MCF 10A (cell line): ENCODE measurements at regions of chr3 and their contacts with region 1.

Region 1: GRCh38 chr3:40719660-40720287 is 195.0 kb downstream of the ZNF621 start:
- DNase-seq: peak; percentile 83
- H3K4me3 Mint-ChIP-seq: no peak overlapping the region
- H3K27ac Mint-ChIP-seq: no peak overlapping the region
- H3K4me1 Mint-ChIP-seq: peaks cover 17% of the 10 kb centered on the region
- H3K27me3 Mint-ChIP-seq: no peaks in the 10 kb centered on the region
- CTCF ChIP-seq: peak; percentile 51

Region 2: GRCh38 chr3:40329071-40329470 is 390.7 kb before region 1 on chr3:
- CTCF ChIA-PET with region 1: interaction called, 3 read pairs
- POLR2A ChIA-PET with region 1: no interaction called
- intact Hi-C with region 1: loop called (anchors 5 kb)
- DNase-seq: no peak
- H3K4me3 Mint-ChIP-seq: no peak overlapping the region
- H3K27ac Mint-ChIP-seq: no peak overlapping the region
- H3K4me1 Mint-ChIP-seq: no peaks in the 10 kb centered on the region
- H3K27me3 Mint-ChIP-seq: no peaks in the 10 kb centered on the region
- CTCF ChIP-seq: no peak

Region 3: DNA sequence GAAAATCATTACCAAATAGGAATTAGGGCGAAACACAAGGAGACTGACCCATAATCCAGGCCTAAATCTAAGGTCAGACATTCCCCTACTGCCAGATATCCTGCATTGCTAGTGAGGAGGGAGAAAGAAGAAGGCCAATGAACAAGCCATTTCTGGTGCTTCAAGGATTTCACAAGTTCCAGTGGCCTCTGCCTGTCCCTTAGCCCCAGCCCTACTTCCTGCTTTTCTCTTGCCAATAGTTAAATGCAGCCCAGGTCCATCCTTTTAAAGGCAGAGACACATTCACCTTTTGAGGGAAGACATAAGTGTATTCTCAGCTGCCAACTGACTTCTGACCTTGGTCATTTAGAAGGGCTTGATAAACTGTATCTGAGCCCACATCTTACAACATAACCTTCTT is 59.2 kb before region 1 on chr3:
- CTCF ChIA-PET with region 1: no interaction called
- POLR2A ChIA-PET with region 1: no interaction called
- intact Hi-C with region 1: no loop called
- DNase-seq: no peak
- H3K4me3 Mint-ChIP-seq: no peak overlapping the region
- H3K27ac Mint-ChIP-seq: no peak overlapping the region
- H3K4me1 Mint-ChIP-seq: no peaks in the 10 kb centered on the region
- H3K27me3 Mint-ChIP-seq: no peaks in the 10 kb centered on the region
- CTCF ChIP-seq: no peak

Region 4: DNA sequence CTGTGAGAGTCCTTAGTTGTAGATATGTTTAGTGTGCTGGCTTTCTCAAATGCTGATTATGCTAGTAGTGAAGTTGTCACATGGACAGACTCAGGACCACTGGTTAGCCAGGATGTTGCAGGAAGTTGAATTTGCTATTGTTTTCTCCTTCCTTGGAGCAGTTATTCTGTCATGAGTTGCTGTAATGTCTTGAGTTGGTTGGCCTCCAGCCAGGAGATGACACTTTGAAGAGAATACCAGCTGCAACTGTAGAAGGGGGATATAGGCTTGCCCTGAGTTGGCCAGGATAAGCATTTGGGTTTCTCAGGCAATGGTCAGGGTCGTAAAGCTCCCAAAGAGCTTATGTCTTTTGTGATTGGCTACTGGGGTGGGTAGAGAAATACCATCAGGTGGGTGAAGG is 11.7 kb after region 1 on chr3:
- CTCF ChIA-PET with region 1: no interaction called
- POLR2A ChIA-PET with region 1: no interaction called
- intact Hi-C with region 1: no loop called
- DNase-seq: no peak
- H3K4me3 Mint-ChIP-seq: no peak overlapping the region
- H3K27ac Mint-ChIP-seq: no peak overlapping the region
- H3K4me1 Mint-ChIP-seq: no peaks in the 10 kb centered on the region
- H3K27me3 Mint-ChIP-seq: no peaks in the 10 kb centered on the region
- CTCF ChIP-seq: no peak

Region 5: DNA sequence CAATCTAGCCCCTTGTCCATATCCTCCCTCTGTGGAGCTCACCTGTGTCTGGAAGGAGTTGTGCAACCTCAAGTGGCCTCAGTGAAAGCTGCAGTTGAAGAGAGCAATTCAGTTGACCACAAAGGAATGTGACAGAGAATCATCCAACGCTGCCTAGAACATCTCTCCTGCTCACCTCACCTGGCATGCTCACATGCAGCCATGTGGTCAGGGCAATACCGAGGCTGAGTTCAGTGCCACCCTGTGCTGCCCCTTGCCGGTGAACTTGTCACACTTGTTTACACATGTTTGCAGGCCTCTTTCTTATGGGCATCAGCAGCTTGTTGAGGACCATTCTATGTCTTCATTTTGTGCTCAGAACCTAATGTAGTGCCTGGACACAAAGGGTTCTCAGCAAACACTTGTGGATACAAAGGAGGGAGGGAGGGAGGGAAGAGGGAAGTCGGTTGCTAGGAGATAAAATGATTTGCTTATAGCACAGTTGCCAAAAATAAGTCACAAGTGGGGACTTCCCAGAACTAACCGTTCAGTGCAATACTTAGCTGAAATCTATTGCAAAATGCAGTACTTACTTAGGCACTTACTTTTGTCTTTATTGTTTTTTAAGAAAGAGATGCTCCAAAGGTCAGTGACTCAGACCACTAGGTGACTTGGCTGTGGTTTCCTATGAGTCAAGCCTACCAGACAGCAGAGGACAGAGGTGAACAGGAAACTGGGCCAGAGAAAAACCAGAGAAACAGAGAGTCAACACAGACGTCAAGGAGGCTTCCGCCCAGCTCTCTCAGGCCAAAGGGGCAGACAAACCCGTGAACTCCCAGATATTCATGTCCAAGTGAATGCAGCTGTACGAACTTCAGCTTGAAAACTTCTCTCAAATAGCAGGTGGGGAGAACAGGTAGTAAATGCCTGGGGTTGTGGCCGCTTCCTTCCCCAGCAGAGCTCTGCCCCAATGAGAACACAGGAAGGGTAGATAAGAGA is 251.7 kb after region 1 on chr3:
- CTCF ChIA-PET with region 1: interaction called, 5 read pairs
- POLR2A ChIA-PET with region 1: no interaction called
- intact Hi-C with region 1: loop called (anchors 1 kb)
- DNase-seq: peak; percentile 98
- H3K4me3 Mint-ChIP-seq: peak overlapping the region; percentile 5
- H3K27ac Mint-ChIP-seq: peak overlapping the region; percentile 98
- H3K4me1 Mint-ChIP-seq: peaks cover 20% of the 10 kb centered on the region
- H3K27me3 Mint-ChIP-seq: no peaks in the 10 kb centered on the region
- CTCF ChIP-seq: peak; percentile 11

Region 6: DNA sequence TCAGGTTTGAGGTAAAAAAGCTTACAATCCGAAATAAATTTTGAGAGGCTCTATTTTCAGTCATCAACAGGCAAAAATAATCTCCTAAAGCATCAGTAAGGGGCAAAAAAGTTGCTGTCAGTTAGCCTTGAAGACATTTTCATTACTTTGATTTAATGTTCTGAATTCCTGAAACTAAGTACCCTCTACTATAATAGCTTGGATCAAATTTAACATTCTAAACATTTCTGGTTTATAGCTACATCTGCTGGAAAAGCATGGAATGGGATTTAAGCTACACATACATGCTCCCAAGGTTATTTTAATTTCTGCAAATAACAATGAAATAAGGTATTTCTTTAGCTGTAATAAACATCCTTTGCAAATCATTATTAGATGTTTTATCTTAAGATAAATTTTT is 996.7 kb after region 1 on chr3:
- CTCF ChIA-PET with region 1: interaction called, 4 read pairs
- POLR2A ChIA-PET with region 1: no interaction called
- intact Hi-C with region 1: loop called (anchors 2 kb)
- DNase-seq: peak; percentile 9
- H3K4me3 Mint-ChIP-seq: no peak overlapping the region
- H3K27ac Mint-ChIP-seq: no peak overlapping the region
- H3K4me1 Mint-ChIP-seq: no peaks in the 10 kb centered on the region
- H3K27me3 Mint-ChIP-seq: no peaks in the 10 kb centered on the region
- CTCF ChIP-seq: no peak

Region 7: GRCh38 chr3:41881233-41881821 is 1161.6 kb after region 1 on chr3:
- CTCF ChIA-PET with region 1: interaction called, 22 read pairs
- POLR2A ChIA-PET with region 1: no interaction called
- intact Hi-C with region 1: loop called (anchors 2 kb)
- DNase-seq: peak; percentile 51
- H3K4me3 Mint-ChIP-seq: no peak overlapping the region
- H3K27ac Mint-ChIP-seq: no peak overlapping the region
- H3K4me1 Mint-ChIP-seq: no peaks in the 10 kb centered on the region
- H3K27me3 Mint-ChIP-seq: no peaks in the 10 kb centered on the region
- CTCF ChIP-seq: peak; percentile 79